Activated CD8-positive, alpha-beta memory T cell treated with anti-CD3 and anti-CD28 coated beads, Interleukin-2, amount 10 ng/mL, durations not matched to agents 7 days and 5 days (primary cell): ENCODE measurements at regions of chr11 and their contacts with region 1.

Region 1: DNA sequence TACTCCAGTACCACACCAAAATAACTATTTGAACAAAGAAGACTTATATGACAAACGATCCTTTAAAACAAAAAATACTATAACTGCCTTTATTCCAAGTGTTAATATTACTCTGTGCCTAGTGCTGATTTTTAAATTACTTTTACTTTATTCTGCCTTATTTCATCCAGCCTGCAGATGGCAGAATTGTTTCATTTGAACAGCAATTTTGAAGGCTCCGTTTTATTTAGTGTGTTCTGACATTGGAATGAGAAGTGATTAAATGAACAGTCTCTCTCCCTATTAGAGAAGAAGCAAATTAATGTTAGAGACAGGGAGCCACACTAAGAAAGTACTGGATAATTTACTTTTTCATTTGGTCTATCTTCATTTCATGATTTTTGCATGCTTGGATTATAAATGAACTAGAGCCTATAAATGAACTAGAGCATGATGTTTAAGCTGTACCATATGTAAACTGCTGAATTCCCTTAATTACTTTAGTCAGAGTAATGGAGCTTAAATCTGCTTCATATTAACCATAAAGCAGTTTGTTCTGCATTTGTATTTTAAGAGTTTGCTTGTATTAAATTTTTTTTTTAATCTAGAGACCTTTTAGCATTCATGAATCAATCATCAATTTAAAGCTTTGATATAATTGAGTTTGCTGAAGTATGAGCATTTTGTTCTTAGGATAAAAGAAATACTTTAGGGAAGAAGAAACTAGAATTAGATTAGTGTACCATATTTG is 9.8 kb downstream of the PDHX start:
- DNase-seq: no peak
- ATAC-seq: peak; percentile 30
- H3K4me3 Mint-ChIP-seq: no peak overlapping the region
- H3K27ac Mint-ChIP-seq: no peak overlapping the region
- H3K4me1 Mint-ChIP-seq: peaks cover 11% of the 10 kb centered on the region
- H3K27me3 Mint-ChIP-seq: no peaks in the 10 kb centered on the region

Region 2: DNA sequence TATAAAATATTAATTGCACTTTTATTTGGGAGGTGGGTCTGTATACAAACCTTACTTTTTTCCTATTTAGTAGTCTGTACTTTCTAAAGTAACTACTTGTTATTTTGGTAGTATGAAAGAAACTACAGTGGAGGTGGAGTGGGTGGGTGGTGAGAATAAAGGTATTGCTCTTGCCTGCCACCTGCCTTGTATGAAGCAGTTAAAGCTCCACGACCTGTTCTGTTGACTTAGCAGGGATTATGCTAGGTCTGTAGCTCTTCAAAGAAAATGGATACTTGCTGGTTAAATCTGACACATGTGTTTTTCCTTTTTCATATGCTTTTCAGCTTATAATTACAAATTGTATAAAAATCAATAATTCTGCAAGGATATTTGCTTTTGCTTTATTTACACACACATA is 193.4 kb before region 1 on chr11:
- CTCF ChIA-PET with region 1: no interaction called
- DNase-seq: no peak
- ATAC-seq: no peak
- H3K4me3 Mint-ChIP-seq: no peak overlapping the region
- H3K27ac Mint-ChIP-seq: no peak overlapping the region
- H3K4me1 Mint-ChIP-seq: no peaks in the 10 kb centered on the region
- H3K27me3 Mint-ChIP-seq: peaks cover 36% of the 10 kb centered on the region

Region 3: GRCh38 chr11:34916015-34916842 is 10.0 kb before region 1 on chr11 and contains the starts of genes APIP and PDHX:
- CTCF ChIA-PET with region 1: interaction called, 22 read pairs
- DNase-seq: peak; percentile 99
- ATAC-seq: peak; percentile 95
- H3K4me3 Mint-ChIP-seq: peak within 1 kb of the TSS; percentile 83
- H3K27ac Mint-ChIP-seq: peak within 1 kb of the TSS; percentile 84
- H3K4me1 Mint-ChIP-seq: peaks cover 27% of the 10 kb centered on the region
- H3K27me3 Mint-ChIP-seq: no peaks in the 10 kb centered on the region
- total RNA-seq, gene APIP: 23.9 to 30.0 TPM
- total RNA-seq, gene PDHX: 27.9 to 34.0 TPM

Region 4: DNA sequence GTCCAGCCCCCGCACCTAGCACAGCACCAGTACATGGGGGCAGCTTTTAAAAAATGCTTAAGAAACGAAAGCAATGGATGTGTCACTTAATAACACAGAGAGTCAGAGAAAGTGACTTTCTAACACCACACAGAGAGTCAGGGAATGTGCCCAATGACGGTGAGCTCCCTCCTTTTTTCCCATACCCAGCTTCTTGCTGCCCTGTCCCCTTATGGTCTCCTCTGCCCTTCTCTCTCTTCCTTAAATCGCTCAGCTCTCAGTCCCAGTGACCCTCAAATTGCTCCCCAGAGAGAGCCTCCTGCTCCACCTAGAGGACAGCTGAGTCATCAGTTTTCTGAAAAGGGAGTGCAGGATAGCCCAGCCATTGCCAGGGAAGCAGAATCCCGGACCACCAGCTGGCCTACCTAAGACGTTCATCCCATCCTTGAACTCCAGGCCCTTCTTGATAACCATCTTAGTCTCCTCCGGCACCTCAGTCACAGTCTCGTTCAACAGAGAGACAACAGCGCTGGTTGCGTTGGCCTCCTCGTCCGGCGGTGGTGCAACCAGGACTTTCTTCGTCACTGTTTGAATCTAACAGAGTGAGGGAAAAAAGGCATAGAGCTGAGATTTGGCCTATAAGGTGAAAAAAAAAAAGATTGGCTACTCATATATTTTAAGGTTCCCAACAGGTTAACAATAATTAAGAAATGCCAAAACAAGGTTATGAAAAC is 379.6 kb after region 1 on chr11:
- CTCF ChIA-PET with region 1: interaction called, 14 read pairs
- DNase-seq: peak; percentile 55
- ATAC-seq: peak; percentile 68
- H3K4me3 Mint-ChIP-seq: no peak overlapping the region
- H3K27ac Mint-ChIP-seq: no peak overlapping the region
- H3K4me1 Mint-ChIP-seq: peaks cover 9% of the 10 kb centered on the region
- H3K27me3 Mint-ChIP-seq: no peaks in the 10 kb centered on the region

Region 5: GRCh38 chr11:35391922-35392813 is 465.9 kb after region 1 on chr11:
- CTCF ChIA-PET with region 1: interaction called, 73 read pairs
- DNase-seq: peak; percentile 79
- ATAC-seq: peak; percentile 62
- H3K4me3 Mint-ChIP-seq: no peak overlapping the region
- H3K27ac Mint-ChIP-seq: no peak overlapping the region
- H3K4me1 Mint-ChIP-seq: peaks cover 20% of the 10 kb centered on the region
- H3K27me3 Mint-ChIP-seq: peaks cover 25% of the 10 kb centered on the region